Mammary epithelial cell (primary cell): ENCODE measurements at regions of chr11 and their contacts with region 1.

Region 1: DNA sequence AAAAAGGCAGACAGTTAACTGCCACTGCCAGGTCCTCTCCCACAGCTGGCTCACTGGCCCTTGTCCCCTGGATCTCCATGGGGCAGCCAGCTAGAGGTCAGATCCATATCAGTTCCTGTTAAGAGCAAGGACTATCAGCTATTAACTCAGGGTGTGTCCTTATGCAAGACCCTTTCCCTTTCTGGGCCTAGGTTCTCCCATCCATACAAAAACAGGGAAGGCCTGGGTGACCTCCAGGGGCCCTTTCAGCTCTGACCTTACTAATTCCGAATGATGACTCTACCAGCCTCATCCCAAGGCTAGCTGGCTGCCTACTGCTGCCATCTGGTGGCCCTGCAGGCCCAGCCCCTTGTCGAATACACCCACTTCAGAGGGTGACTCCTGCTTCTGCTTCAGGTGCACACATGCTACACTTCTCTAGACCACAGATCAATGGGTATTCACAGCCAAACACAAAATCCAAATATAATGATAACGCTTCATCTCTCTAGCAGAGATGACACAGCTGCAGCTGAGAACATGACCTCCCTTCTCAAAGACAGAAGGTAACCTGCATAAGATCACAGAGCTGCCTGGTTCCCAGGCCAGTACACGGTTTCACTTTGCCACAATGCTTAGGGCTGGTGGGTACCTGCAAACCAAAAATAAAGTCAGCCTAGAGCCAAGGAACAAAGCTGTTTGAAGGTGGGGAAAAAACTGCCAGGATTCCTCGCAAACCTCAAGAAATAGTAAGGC is 34.1 kb downstream of the SERGEF start:
- DNase-seq: peak; percentile 39
- H3K4me3 ChIP-seq: no peak overlapping the region
- H3K27ac ChIP-seq: no peak overlapping the region
- H3K4me1 ChIP-seq: no peaks in the 10 kb centered on the region
- H3K27me3 ChIP-seq: no peaks in the 10 kb centered on the region
- CTCF ChIP-seq: peak; percentile 82 to 89

Region 2: DNA sequence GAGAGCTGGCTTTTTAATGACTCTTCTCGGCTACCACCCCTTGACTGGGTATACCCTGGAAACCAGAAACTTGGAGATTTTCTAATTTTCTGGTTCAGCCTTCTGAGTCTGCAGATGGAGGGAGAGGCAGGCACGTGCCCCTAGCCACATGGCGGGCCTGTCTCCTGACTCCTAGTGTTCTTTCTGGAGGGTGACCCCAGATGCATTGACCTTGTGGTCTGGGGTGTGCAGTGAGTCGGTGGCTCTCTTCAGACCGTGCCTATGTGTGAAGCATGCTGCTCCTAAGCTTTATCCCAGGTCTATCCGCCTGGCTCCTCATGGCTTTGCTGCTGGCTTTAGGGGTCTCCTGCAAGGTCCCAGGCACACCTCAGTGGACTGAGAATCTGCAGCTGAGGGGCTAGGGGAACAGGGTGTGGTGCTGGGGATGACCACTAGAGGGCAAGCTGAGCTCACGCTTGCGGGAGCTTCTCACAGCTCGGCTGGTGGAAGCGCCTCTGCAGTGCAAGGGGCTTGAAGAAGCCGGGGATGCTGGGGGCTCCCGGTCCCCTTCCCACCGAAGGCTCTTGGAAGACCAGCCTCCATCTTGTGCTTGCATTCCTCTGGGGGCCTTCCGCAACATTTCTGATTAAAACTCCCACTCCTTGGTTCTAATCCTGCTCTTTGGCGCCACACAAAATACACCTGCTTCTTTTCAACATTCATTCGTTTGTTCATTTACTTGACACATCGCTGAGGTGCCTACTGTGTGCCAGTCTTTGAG is 379.8 kb before region 1 on chr11:
- CTCF ChIA-PET with region 1: interaction called, 4 read pairs
- dilution Hi-C with region 1: no loop called
- in situ Hi-C with region 1: loop called (anchors 10 kb)
- intact Hi-C with region 1: loop called (anchors 1 kb)
- DNase-seq: peak; percentile 20
- H3K4me3 ChIP-seq: no peak overlapping the region
- H3K27ac ChIP-seq: no peak overlapping the region
- H3K4me1 ChIP-seq: no peaks in the 10 kb centered on the region
- H3K27me3 ChIP-seq: no peaks in the 10 kb centered on the region
- CTCF ChIP-seq: peak; percentile 96 to 97

Region 3: GRCh38 chr11:17722000-17722643 is 256.6 kb before region 1 on chr11:
- CTCF ChIA-PET with region 1: no interaction called
- dilution Hi-C with region 1: no loop called
- in situ Hi-C with region 1: loop called in 1 of 2 experiments (anchors 10 kb)
- intact Hi-C with region 1: no loop called
- DNase-seq: no peak
- H3K4me3 ChIP-seq: no peak overlapping the region
- H3K27ac ChIP-seq: no peak overlapping the region
- H3K4me1 ChIP-seq: no peaks in the 10 kb centered on the region
- H3K27me3 ChIP-seq: peaks cover 42% of the 10 kb centered on the region
- CTCF ChIP-seq: peak in 1 of 2 donors; percentile 47

Region 4: DNA sequence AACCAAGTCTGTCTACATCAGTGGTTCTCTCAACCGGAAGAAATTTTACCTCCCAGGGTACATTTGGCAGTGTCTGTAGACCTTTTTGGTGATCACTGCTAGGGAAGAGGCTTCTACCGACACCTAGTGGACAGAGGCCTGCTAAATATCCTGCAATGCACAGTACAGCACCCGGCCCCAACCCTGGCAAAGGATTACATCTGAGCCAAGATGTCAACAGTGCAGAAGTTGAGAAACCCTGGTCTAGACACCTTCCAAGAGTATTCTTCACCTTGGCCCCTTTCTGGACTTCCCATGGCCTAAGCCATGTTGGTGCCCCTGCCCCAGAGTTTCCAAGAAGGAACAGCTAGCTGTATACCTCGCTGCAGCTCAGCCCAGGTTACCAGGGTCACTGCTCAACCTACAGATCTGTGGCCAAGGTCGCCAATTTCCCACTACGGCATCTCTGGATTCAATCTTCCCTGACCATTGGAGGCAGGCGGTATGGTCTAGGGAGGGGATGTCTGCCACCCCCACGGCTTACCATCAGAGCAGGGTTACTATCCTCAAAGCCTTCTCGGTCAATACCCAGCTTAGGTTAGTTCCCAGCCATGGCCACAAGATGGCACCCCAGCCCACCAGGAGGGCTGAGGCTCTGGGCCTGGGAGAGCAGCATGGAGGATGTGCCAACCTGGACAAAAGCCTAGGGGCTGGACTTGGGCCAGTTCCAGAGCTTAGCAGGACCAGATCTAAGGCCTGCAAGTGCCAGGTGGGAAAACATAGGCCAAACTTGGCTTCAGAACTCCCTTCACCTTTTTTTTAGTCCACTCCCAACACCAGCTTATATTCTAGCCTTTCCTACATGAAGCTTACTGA is 247.9 kb before region 1 on chr11:
- CTCF ChIA-PET with region 1: interaction called, 20 read pairs
- dilution Hi-C with region 1: loop called (anchors 5 kb)
- in situ Hi-C with region 1: loop called (anchors 5 to 10 kb)
- intact Hi-C with region 1: loop called (anchors 1 kb)
- DNase-seq: peak; percentile 68
- H3K4me3 ChIP-seq: no peak overlapping the region
- H3K27ac ChIP-seq: no peak overlapping the region
- H3K4me1 ChIP-seq: peaks cover 9% of the 10 kb centered on the region
- H3K27me3 ChIP-seq: peaks cover 12% of the 10 kb centered on the region
- CTCF ChIP-seq: peak; percentile 82 to 96

Region 5: GRCh38 chr11:17750013-17750800 is 228.5 kb before region 1 on chr11:
- CTCF ChIA-PET with region 1: no interaction called
- dilution Hi-C with region 1: no loop called
- in situ Hi-C with region 1: loop called in 1 of 2 experiments (anchors 10 kb)
- intact Hi-C with region 1: no loop called
- DNase-seq: no peak
- H3K4me3 ChIP-seq: no peak overlapping the region
- H3K27ac ChIP-seq: no peak overlapping the region
- H3K4me1 ChIP-seq: no peaks in the 10 kb centered on the region
- H3K27me3 ChIP-seq: no peaks in the 10 kb centered on the region
- CTCF ChIP-seq: no peak

Region 6: DNA sequence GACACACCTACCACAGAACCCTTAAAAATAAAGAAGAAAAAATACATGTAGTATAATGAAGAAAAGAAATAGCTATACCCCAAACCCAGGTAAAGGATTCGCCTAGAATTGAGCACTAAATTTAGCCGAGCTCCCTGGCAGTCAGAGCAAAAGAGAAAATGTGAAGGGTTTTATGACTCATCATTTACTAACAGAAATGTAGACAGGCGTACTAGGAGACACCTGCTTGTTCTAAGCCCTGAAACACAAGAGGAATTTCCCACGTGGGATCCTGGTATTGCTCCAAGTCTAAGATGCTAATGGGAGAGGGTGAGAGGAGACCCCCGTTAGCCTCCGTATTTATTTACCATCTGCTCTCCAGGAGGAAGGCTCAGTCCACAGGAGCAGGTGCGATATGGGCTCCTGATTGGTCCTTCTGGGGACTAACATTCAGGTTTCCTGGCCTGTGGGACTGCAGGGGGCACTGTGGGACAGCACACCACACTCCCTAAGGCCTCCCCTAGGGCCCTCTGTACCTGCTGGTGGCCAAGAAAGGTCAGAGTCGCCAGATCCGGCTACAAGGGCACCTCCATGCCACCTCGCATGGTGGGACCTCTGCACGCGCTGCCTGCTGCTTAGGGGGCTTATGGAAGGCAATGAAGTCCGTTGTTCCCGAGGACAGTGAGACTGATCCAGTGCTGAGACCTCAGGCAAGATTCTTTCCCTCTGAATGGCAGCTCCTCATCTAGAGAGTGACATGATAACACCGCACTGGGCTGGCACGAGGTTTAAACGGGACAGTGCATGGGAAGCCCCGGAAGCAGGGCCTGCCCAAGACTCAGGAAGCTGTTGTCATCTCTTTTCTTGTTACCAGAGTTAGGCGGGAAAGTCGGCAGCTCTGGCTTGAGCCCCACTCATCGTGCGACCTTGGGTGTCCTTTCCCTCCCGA is 218.4 kb before region 1 on chr11:
- CTCF ChIA-PET with region 1: no interaction called
- dilution Hi-C with region 1: no loop called
- in situ Hi-C with region 1: loop called (anchors 10 kb)
- intact Hi-C with region 1: loop called (anchors 1 kb)
- DNase-seq: peak; percentile 26
- H3K4me3 ChIP-seq: no peak overlapping the region
- H3K27ac ChIP-seq: no peak overlapping the region
- H3K4me1 ChIP-seq: no peaks in the 10 kb centered on the region
- H3K27me3 ChIP-seq: no peaks in the 10 kb centered on the region
- CTCF ChIP-seq: peak; percentile 53 to 64

Region 7: GRCh38 chr11:17770048-17770652 is 208.6 kb before region 1 on chr11:
- CTCF ChIA-PET with region 1: interaction called, 6 read pairs
- dilution Hi-C with region 1: no loop called
- in situ Hi-C with region 1: loop called in 1 of 2 experiments (anchors 10 kb)
- intact Hi-C with region 1: loop called (anchors 1 kb)
- DNase-seq: no peak
- H3K4me3 ChIP-seq: no peak overlapping the region
- H3K27ac ChIP-seq: no peak overlapping the region
- H3K4me1 ChIP-seq: peaks cover 4% of the 10 kb centered on the region
- H3K27me3 ChIP-seq: no peaks in the 10 kb centered on the region
- CTCF ChIP-seq: peak; percentile 3 to 18